Posterior vena cava (tissue), 2 donors: ENCODE measurements at regions of chr18 and their contacts with region 1.

Region 1: DNA sequence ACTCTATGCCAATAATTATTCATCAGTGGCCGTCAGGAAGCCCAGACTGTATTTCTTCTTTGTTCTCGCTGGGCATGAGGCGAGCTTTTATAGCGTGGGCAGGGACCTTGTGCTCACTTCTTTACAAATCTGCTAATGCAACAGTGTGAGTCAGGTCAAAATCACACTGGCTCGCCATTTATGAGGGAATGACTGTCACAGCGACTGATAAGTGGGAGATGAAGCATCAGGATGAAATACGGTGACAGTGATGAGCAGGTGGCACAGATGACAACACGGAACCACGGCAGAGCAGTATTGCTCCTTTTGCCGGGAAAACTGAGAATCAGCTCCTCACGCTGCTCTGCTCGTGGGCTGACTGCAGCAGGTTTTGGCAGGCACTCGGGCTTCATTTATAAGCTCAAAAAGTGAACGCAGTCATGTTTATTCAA is 20.5 kb downstream of the TYMS start:
- DNase-seq: no peak

Region 2: GRCh38 chr18:961644-962355 is 283.8 kb after region 1 on chr18:
- intact Hi-C with region 1: no loop called
- DNase-seq: no peak

Region 3: DNA sequence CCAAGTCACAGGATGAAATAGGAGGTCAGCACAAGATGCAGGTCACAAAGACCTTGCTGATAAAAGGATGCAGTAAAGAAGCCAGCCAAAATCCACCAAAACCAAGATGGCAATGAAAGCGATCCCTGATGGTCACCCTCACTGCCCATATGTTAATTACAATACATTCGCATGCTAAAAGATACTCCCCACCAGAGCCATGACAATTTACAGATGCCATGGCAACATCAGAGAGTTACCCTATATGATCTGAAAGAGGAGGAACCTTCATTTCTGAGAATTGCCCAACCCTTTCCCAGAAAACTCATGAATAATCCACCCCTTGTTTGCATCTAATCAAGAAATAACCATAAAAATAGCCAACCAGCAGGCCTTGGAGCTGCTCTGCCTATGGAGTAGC is 1183.5 kb after region 1 on chr18:
- intact Hi-C with region 1: loop called in 1 of 2 experiments (anchors 5 kb)
- DNase-seq: no peak